ENCODE measurements at regions of chr4 and their contacts with region 1.

Region 1: GRCh38 chr4:102684610-102685052 is 76.1 kb downstream of the MANBA start:
- DNase-seq: peak; percentile 97
- H3K4me3 ChIP-seq: no peak overlapping the region
- H3K27ac ChIP-seq: peak overlapping the region; percentile 95
- H3K4me1 ChIP-seq: peaks cover 44% of the 10 kb centered on the region
- H3K27me3 ChIP-seq: no peaks in the 10 kb centered on the region
- CTCF ChIP-seq: no peak

Region 2: GRCh38 chr4:102665527-102665926 is 19.1 kb before region 1 on chr4:
- CTCF ChIA-PET with region 1: no interaction called
- dilution Hi-C with region 1: no loop called
- in situ Hi-C with region 1: no loop called
- intact Hi-C with region 1: loop called (anchors 2 kb)
- DNase-seq: peak; percentile 93
- H3K4me3 ChIP-seq: peak overlapping the region in 2 of 3 experiments; percentile 3 to 11
- H3K27ac ChIP-seq: peak overlapping the region; percentile 98
- H3K4me1 ChIP-seq: peaks cover 40% of the 10 kb centered on the region
- H3K27me3 ChIP-seq: no peaks in the 10 kb centered on the region
- CTCF ChIP-seq: no peak

Region 3: DNA sequence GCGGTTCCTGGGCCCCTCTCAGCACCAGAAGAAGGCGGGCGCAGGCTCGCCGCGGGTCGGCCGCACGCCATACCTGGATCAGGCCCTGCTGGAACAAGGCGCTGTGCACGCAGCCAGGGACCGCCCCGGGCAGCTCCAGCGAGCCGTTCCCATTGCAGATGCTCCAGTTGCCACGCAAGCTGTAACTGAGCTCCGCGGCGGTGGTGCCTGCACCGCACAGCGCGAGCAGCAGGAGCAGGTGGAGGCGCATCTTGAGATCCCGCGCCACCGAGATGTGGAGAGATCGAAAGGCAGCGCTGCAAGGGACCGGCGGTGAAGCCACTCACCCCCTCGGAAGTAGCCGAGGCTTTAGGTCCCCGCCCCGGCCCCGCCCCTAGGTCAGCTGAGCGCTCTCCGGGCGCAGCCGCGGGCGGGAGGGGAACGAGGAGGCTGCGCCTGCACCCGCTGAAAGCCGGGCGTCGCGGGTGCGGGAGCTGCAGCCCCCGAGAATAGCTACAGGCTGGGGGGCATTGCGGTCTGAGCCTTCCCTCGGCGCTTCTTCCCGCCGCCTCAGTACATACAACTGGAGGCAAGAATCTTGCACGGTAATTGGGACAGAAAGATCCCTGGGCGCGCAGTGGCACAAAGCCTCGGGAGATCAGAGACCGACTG is 76.1 kb after region 1 on chr4 and contains the start of gene MANBA:
- CTCF ChIA-PET with region 1: no interaction called
- dilution Hi-C with region 1: no loop called
- in situ Hi-C with region 1: no loop called
- intact Hi-C with region 1: loop called (anchors 5 kb)
- DNase-seq: peak; percentile 84
- H3K4me3 ChIP-seq: peak within 1 kb of the TSS; percentile 56 to 84 (median 83)
- H3K27ac ChIP-seq: peak within 1 kb of the TSS; percentile 58
- H3K4me1 ChIP-seq: peaks cover 17% of the 10 kb centered on the region
- H3K27me3 ChIP-seq: no peaks in the 10 kb centered on the region
- CTCF ChIP-seq: peak in 1 of 2 donors; percentile 3
- total RNA-seq, gene MANBA: 21.6 to 44.0 TPM